Activated naive CD4-positive, alpha-beta T cell treated with anti-CD3 and anti-CD28 coated beads, Interleukin-2, amount 10 ng/mL, durations not matched to agents 7 days and 5 days (primary cell): ENCODE measurements at regions of chr15 and their contacts with region 1.

Region 1: DNA sequence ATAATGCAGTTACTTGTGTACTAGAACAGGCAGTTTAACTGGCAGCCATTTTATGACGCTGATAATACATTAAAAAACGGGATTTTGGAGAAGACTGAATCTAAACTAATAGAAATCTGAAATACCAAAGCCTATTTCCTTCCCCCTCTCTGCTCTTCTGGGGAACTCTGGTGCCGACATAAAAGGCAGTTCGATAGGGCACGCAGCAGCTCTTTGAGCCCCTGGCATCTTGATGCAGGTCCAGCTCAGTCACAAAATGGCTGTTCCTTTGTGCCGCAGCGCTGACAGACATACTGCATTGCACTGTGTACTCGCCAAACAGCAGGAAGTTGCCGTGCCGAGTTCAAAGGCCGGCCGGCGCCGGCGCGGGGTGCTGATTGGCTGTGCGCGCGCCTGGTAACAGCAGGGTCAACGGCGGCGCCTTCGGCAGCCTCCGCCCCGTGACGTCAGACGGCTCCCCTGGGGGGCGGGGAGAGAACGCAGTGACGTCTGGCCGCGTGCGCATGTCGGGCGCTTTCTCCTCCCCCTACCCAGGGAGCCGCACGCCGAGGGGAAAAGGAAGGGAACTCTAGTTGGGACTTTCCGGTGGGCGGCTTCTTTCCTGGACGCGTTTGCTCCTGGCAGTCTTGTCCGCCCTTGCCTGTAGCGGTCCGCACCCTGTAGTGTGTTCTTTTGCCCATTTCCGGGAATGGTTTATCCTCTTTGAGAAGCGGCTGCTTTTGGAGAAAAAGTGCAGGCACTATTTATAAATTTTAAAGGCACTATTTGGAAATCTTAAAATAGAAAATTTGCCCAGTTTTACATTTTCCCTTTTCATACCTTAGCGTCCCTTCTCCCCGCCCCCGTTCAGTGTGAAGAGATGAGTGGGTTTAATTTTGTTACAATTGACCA is 4.1 kb downstream of the CHD2 start:
- DNase-seq: peak; percentile 99
- H3K4me3 Mint-ChIP-seq: peak overlapping the region; percentile 96
- H3K27ac Mint-ChIP-seq: peak overlapping the region; percentile 100
- H3K4me1 Mint-ChIP-seq: peaks cover 59% of the 10 kb centered on the region
- H3K27me3 Mint-ChIP-seq: peaks cover 4% of the 10 kb centered on the region

Region 2: GRCh38 chr15:92831655-92832328 is 72.4 kb before region 1 on chr15:
- CTCF ChIA-PET with region 1: interaction called, 13 read pairs
- DNase-seq: peak; percentile 95
- H3K4me3 Mint-ChIP-seq: peak overlapping the region; percentile 65
- H3K27ac Mint-ChIP-seq: peak overlapping the region; percentile 98
- H3K4me1 Mint-ChIP-seq: peaks cover 56% of the 10 kb centered on the region
- H3K27me3 Mint-ChIP-seq: no peaks in the 10 kb centered on the region

Region 3: DNA sequence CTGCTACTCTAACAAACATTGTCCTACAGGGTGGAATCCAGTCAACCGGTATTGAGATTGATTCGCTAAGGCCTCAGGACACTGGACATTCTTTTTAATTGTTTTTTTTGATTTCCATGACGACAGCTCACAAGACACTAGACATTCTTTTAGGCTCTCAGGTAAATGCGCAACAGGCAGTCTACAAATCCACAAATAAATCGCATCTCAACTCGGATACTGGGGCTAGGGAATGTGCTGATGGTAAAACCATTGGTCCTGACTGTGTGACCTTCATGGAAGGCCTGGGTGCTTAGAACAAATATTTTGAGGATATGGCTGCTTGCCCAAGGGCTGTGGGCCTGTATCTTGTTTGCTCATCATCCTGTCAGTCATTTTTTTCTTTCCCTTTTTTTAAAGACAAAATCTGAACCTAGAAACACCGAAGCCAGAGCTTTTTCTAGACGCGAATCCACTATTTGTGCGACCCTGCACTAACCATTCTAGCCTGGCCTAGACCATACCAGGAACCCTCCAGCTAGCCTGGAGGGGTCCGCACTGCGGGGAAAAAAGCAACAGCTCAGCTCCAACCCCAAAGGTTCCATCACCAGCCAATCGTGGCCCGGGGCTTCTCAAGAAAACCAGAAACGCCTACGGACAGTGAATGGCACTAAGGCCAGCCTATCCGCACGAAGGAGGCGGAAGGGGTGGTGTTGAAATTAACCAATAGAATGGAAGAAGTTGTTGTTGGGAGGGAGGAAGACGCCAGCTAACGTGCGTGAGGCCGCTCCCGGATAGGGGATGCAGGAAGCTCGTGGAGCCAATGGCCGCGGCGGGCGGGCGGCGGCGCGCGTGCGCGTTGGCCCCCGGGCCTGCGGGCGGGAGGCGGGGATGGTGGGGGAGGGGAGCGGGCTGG is 22.1 kb before region 1 on chr15:
- CTCF ChIA-PET with region 1: interaction called, 45 read pairs
- DNase-seq: peak; percentile 98
- H3K4me3 Mint-ChIP-seq: peak overlapping the region; percentile 90
- H3K27ac Mint-ChIP-seq: peak overlapping the region; percentile 99
- H3K4me1 Mint-ChIP-seq: peaks cover 57% of the 10 kb centered on the region
- H3K27me3 Mint-ChIP-seq: peaks cover 12% of the 10 kb centered on the region

Region 4: DNA sequence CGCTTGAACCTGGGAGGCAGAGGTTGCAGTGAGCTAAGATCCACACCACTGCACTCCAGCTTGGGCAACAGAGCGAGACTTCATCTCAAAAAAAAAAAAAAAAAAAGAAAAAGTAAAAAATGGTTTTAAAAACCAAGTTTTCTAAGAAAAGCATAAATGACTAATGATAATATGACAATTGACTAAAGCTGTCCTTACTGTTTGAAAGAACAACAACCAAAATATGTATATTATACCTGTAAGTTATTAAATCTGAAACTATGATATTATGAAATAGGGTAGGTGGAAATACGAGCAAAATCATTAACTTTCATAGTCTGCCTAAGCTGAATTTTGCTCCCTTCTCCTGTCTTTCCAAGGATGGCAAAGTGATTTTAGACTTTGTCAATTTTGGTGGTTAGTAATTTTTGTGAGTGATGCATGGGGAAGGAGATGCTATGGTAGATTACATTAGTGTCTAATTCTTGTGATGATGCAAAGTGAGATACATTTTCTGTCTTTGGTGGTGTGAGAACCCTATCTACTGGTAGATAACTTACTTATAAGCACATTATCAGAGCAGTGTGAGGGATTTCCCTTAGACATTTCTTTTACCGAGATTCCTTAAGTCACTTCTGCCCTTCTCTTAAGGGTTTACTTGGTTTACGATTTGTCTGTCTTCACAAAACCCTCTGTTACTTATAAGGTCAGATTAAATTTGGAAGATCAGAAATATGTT is 14.6 kb before region 1 on chr15:
- CTCF ChIA-PET with region 1: interaction called, 45 read pairs
- DNase-seq: no peak
- H3K4me3 Mint-ChIP-seq: peak overlapping the region; percentile 39
- H3K27ac Mint-ChIP-seq: peak overlapping the region; percentile 16
- H3K4me1 Mint-ChIP-seq: peaks cover 71% of the 10 kb centered on the region
- H3K27me3 Mint-ChIP-seq: no peaks in the 10 kb centered on the region

Region 5: GRCh38 chr15:92917606-92918407 is 13.6 kb after region 1 on chr15:
- CTCF ChIA-PET with region 1: interaction called, 24 read pairs
- DNase-seq: peak; percentile 96
- H3K4me3 Mint-ChIP-seq: peak overlapping the region; percentile 42
- H3K27ac Mint-ChIP-seq: peak overlapping the region; percentile 96
- H3K4me1 Mint-ChIP-seq: peaks cover 85% of the 10 kb centered on the region
- H3K27me3 Mint-ChIP-seq: no peaks in the 10 kb centered on the region